AG04449 (cell line): ENCODE measurements at regions of chr9 and their contacts with region 1.

Region 1: DNA sequence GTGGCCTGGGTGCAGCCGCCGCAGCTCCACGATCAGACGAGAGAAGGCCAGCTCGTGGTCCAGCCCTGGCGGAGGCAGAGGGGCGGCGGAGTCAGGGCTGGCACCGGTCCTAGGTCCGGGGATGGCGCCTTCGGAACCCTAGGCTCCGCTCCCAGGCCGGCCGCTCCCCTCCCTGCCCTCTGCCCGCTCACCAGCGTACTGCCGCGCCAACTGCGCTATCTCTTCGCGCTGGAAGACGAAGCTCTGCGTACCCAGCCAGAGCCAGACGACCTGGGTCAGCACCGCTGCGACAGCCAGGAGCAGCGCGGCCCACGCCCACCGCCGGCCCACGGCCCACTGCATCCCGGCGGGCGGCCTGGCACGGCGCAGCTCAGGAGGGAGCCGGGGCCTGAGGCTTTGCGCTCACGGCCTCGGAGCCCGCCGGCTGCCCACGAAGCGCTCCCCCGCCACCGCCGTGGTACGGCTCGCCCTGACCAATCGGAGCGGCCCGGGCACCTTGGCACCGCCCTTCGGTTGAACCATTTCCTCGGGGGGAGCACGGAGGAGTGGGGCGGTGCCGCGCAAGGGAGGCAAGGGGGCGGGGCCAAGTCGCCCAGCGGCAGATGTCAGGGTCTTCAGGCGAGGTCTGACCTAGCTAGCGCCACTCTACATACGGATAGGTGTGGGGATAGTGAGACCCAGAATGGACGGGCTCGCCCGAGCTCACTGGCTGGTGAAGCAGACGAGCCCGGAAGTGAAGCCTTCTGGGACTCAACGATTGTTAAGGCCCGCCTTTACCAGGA is at the start of gene SIGMAR1:
- DNase-seq: no peak
- H3K4me3 ChIP-seq: peak within 1 kb of the TSS; percentile 80
- CTCF ChIP-seq: no peak

Region 2: GRCh38 chr9:34611829-34612630 is 25.5 kb before region 1 on chr9 and contains the start of gene RPP25L:
- CTCF ChIA-PET with region 1: interaction called, 274 read pairs
- POLR2A ChIA-PET with region 1: interaction called, 3 read pairs
- DNase-seq: no peak
- H3K4me3 ChIP-seq: peak within 1 kb of the TSS; percentile 86
- CTCF ChIP-seq: no peak

Region 3: DNA sequence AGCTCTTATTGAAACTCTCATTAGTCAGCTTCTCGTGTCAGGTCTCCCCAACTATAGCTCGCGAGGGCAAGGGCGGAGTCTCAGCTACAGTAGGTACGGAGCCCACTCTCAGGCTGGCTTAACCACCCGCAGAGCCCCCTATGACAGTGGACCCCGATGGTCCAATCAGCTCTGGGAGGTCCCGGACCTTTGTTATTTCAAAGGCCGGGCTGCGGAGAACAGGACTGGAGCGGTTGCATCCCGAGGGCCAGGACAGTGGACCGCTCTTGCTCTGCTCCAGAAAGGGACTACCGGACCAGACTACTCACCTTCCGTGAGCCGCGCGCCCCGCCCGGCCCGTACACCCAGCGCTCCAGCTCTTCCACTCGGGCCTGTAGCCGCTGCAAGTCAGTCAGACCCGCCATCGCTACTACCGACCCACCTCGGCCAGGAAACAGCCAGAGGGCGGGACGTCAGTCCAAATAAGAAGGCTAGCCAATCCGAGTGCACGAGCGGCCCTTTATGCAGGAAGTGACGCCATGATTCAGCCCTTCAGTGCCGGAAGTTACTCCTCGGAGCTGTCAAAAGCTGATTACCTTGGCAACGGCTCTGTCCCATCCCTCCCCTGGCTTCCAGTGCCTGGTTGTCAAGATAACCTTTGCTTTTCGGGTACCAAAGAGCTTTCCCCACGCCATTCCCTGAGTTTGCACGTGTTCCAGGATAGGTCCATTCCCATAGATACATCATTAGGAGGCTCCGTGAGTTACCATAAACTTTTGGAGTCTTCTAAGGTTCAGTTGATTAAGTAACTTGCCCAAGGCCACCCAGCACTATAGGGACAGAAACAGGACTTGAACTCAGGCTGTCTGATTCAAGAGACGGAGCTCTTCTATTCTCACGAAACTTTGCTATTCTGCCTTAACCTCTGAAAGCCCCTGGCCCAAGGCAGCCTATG is 17.2 kb before region 1 on chr9 and contains the start of gene DCTN3:
- CTCF ChIA-PET with region 1: interaction called, 274 read pairs
- POLR2A ChIA-PET with region 1: interaction called, 3 read pairs
- DNase-seq: peak; percentile 75
- H3K4me3 ChIP-seq: peak within 1 kb of the TSS; percentile 92
- CTCF ChIP-seq: no peak

Region 4: DNA sequence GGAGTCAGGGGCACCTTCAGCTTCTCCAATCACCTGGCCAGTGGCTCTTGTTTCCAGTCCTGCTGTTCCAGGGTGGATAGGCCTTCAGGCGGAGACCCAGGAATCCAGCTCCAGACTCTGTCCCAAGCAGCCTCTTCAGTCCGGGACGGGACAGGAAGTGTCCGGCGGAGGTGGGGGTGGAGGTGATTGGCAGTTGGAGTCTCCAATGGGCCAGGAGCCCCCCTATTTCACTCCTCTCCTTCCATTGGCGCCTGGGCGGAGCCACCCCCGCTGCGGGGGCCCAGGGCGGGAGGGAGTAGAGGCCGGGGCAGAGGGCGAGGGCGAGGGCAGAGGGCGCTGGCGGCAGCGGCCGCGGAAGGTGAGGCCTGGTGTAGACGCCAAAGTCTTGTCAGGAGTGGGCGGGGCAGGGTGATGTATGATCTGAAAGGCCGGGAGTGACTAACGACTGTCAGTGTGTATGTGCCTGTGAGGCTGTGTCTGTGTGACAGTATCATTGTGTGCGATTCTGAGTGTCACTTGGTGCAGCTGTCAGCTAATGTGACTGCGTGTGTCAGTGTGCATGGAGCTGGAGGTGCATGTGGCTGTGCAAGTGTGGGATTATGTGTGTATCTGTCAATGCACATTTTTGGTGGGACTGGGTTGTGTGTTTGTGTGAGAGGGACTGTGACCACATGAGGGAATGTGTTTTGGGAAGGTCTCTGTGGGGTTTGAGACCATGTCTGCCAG is 14.5 kb after region 1 on chr9 and contains the start of gene IL11RA:
- CTCF ChIA-PET with region 1: interaction called, 180 read pairs
- POLR2A ChIA-PET with region 1: interaction called, 31 read pairs
- DNase-seq: peak; percentile 40
- H3K4me3 ChIP-seq: peak within 1 kb of the TSS; percentile 70
- CTCF ChIP-seq: no peak

Region 5: GRCh38 chr9:34665381-34666250 is 28.1 kb after region 1 on chr9:
- CTCF ChIA-PET with region 1: interaction called, 14 read pairs
- POLR2A ChIA-PET with region 1: no interaction called
- DNase-seq: peak; percentile 65
- H3K4me3 ChIP-seq: peak overlapping the region; percentile 92
- CTCF ChIP-seq: no peak